Thyroid gland (tissue), 4 donors: ENCODE measurements at regions of chr22 and their contacts with region 1.

Region 1: DNA sequence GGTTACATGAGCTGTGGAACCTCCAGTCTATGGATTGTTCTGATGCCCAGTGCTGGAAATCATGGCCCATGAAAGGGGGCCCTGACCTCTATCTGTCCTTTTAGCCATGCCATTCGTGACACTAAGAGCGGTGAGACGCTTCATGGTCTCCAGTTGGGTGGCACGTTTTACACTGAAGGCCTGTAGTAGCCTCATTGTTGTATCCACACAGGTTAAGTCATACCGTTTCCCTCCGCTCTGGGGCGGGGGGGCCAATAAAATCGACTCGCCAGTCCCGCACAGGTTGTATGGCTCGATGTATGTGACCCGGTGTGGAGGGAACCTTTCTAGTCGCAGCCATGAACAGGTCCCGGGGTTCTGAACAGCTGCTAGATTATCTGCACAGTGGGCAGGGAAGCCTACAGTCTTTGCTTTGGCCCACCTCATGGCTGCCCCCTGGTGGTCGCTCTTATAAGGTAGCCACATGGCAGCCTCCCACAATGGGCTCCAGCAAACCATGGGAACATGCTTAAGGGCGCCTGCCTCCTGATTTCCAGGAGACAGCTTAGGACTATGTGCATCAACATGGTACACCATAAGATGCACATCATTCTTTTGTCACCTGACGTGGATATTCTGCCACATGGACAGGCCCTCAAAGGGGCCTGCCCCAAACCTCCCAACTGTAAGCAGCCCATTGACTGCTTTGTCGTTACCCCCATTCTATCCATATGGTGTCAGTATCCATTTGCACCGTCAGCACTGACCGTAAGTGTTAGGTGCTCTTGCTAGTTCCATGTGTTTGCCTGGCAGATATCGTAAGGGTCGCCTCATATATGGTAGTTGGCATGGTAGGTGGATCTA is 19.7 kb upstream of the APOL3 start:
- DNase-seq: peak; percentile 79 to 85
- H3K4me3 ChIP-seq: no peak overlapping the region
- H3K27ac ChIP-seq: no peak overlapping the region
- H3K4me1 ChIP-seq: peaks cover 0 to 13% of the 10 kb centered on the region in 2 donors
- H3K27me3 ChIP-seq: no peaks in the 10 kb centered on the region
- CTCF ChIP-seq: peak; percentile 63 to 90 (median 70)
- POLR2A ChIP-seq: no peak

Region 2: DNA sequence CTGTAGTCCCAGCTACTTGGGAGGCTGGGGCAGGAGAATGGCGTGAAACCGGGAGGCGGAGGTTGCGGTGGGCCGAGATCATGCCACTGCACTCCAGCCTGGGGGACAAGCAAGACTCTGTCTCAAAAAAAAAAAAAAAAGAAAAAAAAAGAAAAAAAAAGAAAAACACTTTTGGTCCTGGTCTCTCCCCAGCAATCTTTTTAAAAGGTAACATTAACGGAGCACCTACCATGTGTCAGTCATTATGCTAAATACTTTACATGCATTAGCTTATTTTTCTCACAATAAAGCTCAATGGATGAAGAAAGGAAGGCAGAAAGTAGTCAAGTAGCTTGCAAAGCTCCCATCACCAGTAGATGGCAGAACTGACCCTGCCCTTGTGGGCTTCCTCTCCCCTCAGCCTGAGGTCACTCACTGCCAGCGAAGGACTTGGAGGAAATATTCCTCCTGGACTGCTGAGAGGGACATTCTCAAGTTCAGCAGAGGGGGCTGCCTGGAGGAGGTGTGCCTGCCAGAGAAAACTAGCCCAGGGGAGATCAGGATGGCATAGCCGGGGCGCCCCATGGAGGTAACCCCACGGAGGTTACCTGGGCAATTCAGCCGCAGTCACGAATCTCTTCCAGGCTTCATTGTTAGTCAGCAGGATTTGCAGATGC is 35.2 kb before region 1 on chr22:
- intact Hi-C with region 1: loop called (anchors 5 kb)
- DNase-seq: peak; percentile 65 to 70
- H3K4me3 ChIP-seq: no peak overlapping the region
- H3K27ac ChIP-seq: no peak overlapping the region
- H3K4me1 ChIP-seq: peaks cover 13 to 39% of the 10 kb centered on the region in 2 donors
- H3K27me3 ChIP-seq: no peaks in the 10 kb centered on the region
- CTCF ChIP-seq: peak; percentile 47 to 83 (median 62)
- POLR2A ChIP-seq: no peak

Region 3: DNA sequence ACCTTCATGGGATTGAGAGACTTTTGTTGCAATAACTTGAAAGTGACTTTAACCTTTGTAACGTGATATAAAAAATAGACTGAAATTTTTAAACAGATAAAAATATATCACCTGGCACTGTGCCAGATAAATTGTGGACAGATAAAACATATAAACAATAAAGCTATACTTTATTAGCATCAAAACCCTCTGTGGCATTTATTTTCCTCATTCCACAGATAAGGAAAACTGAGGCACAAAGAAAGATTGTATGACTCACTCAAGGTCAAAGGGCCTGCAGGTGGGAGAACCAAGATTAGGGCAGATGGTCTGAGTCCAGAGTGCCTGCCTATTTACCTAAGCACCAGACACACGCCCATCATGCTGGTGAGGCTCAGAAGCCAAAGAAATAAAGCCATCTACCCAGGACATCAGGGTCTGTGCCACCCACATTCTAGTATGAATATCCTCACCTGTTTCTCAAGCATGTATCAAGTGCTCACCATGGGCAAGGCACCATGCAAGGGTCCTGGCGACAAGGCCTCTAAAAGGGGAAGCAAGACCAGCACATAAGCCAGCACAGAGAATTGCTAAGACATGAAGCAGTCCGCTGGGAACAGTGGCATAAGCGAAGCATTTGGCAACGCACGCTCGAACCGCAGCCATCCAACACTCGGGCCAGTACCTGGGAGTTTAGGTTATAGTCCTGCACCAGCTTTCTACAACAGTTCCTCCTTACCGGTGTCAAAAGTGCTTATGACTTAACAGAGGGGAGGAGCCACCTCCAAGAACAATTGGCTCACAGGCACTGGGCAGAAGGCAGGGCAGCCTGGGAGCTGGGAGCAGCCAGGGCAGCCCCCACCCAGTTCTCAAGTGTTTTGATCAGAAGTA is 189.9 kb after region 1 on chr22:
- intact Hi-C with region 1: no loop called
- DNase-seq: peak; percentile 89 to 93
- H3K4me3 ChIP-seq: no peak overlapping the region
- H3K27ac ChIP-seq: peak overlapping the region; percentile 88 to 99 (median 93)
- H3K4me1 ChIP-seq: peaks cover 99 to 100% of the 10 kb centered on the region in 2 donors
- H3K27me3 ChIP-seq: no peaks in the 10 kb centered on the region
- CTCF ChIP-seq: no peak
- POLR2A ChIP-seq: peak in 1 of 2 donors; percentile 84